Cardiac septum (tissue), 1 donor: ENCODE measurements at regions of chr10 and their contacts with region 1.

Region 1: GRCh38 chr10:103618575-103619423 is 125.3 kb downstream of the NEURL1 start:
- DNase-seq: no peak

Region 2: DNA sequence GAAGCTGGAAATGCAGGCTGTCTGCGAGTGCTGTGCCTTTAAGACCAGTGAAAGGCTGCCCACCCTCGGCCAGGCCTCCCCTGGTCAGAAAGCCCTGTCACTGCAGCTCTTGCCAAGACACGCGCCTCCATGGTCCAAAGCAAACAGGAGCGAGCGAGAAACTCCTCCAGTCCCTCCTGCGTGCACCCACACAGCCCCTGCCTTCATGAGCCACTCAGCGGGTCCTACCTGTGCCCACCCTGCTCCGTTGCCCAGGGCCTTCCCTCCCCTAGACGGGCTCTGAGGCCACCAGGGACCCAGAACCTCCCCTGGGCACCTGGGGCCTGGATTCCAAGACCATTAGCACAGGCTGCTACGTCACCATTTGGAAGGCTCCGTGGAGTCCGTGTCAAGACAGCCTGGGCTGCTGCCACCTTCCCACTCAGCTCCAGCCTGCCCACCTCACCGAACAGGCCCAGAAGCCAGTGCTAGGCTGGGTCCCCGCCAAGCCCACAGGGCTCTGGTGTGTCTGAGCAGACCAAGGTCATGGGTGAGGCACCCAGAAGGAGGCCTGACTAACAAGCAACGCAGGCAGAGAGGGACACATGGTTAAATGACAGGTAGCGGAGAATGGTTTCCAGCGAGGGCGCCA is 19.2 kb after region 1 on chr10:
- intact Hi-C with region 1: no loop called
- DNase-seq: peak; percentile 84

Region 3: GRCh38 chr10:103666087-103666761 is 47.4 kb after region 1 on chr10:
- intact Hi-C with region 1: loop called (anchors 5 kb)
- DNase-seq: no peak